ENCODE measurements at regions of chr17 and their contacts with region 1.

Region 1: GRCh38 chr17:18203308-18203707 is 19.7 kb downstream of the ALKBH5 start:
- DNase-seq: no peak
- H3K4me3 ChIP-seq: no peak overlapping the region
- H3K27ac ChIP-seq: no peak overlapping the region
- H3K4me1 ChIP-seq: no peaks in the 10 kb centered on the region
- H3K27me3 ChIP-seq: no peaks in the 10 kb centered on the region
- CTCF ChIP-seq: no peak
- POLR2A ChIP-seq: no peak

Region 2: GRCh38 chr17:17836250-17836817 is 367.0 kb before region 1 on chr17:
- intact Hi-C with region 1: loop called (anchors 10 kb)
- DNase-seq: peak; percentile 97 to 98
- H3K4me3 ChIP-seq: peak overlapping the region; percentile 77 to 98 (median 93)
- H3K27ac ChIP-seq: peak overlapping the region; percentile 99 to 100
- H3K4me1 ChIP-seq: peaks cover 12 to 55% of the 10 kb centered on the region in 2 donors
- H3K27me3 ChIP-seq: no peaks in the 10 kb centered on the region
- CTCF ChIP-seq: peak in 1 of 3 donors; percentile 11
- POLR2A ChIP-seq: peak; percentile 98

Region 3: GRCh38 chr17:18166894-18167293 is 36.4 kb before region 1 on chr17:
- intact Hi-C with region 1: no loop called
- DNase-seq: no peak
- H3K4me3 ChIP-seq: no peak overlapping the region
- H3K27ac ChIP-seq: no peak overlapping the region
- H3K4me1 ChIP-seq: no peaks in the 10 kb centered on the region
- H3K27me3 ChIP-seq: no peaks in the 10 kb centered on the region
- CTCF ChIP-seq: no peak
- POLR2A ChIP-seq: no peak

Region 4: GRCh38 chr17:18225121-18225566 is 21.8 kb after region 1 on chr17:
- intact Hi-C with region 1: loop called (anchors 2 kb)
- DNase-seq: peak; percentile 95
- H3K4me3 ChIP-seq: peak overlapping the region; percentile 30 to 86 (median 64)
- H3K27ac ChIP-seq: peak overlapping the region; percentile 77 to 94
- H3K4me1 ChIP-seq: peaks cover 0 to 3% of the 10 kb centered on the region in 2 donors
- H3K27me3 ChIP-seq: no peaks in the 10 kb centered on the region
- CTCF ChIP-seq: no peak
- POLR2A ChIP-seq: no peak